Activated CD4-positive, alpha-beta T cell treated with anti-CD3 and anti-CD28 coated beads for 36 hours (primary cell): ENCODE measurements at regions of chr2 and their contacts with region 1.

Region 1: GRCh38 chr2:181058378-181059269 is 78.2 kb downstream of the UBE2E3 start:
- DNase-seq: peak; percentile 50
- ATAC-seq: peak; percentile 69
- H3K4me3 Mint-ChIP-seq: no peak overlapping the region
- H3K27ac Mint-ChIP-seq: no peak overlapping the region
- H3K4me1 Mint-ChIP-seq: peaks cover 6% of the 10 kb centered on the region
- H3K27me3 Mint-ChIP-seq: no peaks in the 10 kb centered on the region

Region 2: DNA sequence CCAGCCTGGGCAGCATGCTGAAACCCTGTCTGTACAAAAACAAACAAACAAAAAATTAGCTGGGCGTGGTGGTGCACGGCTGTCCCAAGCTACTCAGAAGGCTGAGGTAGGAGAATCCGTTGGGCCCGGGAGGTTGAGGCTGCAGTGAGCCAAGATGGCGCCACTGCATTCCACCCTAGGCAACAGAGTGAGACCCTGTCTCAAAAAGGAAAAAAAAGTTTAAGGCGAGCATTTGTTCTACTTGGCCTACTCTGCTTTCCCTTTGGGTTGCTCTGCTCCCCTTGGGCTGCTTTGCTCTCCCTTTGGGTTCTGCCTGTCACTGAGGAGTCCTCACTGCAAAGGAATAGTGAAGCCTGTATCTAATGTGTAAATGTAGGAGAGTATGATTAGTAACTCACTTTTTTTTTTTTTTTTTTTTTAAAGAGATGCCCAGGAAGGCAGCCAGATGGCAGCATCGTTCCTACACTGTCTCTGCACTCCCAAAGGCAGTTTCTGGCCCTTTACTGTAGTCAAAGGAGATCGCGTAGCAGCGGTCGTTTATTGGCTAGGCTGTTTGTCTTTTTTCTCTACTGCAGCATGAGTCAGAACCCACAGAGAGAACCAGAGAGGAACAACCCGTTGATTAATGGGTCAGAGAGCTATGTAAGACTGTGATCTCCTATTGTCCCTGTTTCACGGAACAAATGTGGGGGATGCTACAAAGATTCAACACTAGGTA is 933.2 kb before region 1 on chr2:
- CTCF ChIA-PET with region 1: interaction called, 37 read pairs
- POLR2A ChIA-PET with region 1: no interaction called
- intact Hi-C with region 1: loop called (anchors 1 kb)
- DNase-seq: peak; percentile 60
- ATAC-seq: peak; percentile 88
- H3K4me3 Mint-ChIP-seq: no peak overlapping the region
- H3K27ac Mint-ChIP-seq: no peak overlapping the region
- H3K4me1 Mint-ChIP-seq: peaks cover 1% of the 10 kb centered on the region
- H3K27me3 Mint-ChIP-seq: peaks cover 7% of the 10 kb centered on the region

Region 3: DNA sequence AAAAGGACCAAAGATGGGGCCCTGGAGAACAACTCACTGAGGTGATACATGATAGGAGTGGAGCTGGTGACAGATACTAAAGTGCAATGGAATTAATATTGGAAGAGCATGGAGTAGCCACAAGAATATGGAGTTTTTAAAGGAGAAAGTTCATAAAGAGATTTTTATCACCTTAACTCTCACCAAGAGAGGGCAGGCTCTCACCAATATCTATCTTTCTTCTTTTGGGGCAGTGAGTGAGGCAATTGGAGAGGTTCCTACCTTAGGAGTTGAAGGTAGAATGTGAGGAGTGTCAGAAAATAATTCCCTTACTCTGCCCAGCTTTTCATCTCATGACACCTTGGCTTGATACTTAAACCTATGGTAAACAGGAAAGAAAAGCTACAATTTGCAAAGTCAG is 817.9 kb before region 1 on chr2:
- CTCF ChIA-PET with region 1: no interaction called
- POLR2A ChIA-PET with region 1: no interaction called
- intact Hi-C with region 1: loop called in 1 of 2 experiments (anchors 10 kb)
- DNase-seq: no peak
- ATAC-seq: no peak
- H3K4me3 Mint-ChIP-seq: no peak overlapping the region
- H3K27ac Mint-ChIP-seq: no peak overlapping the region
- H3K4me1 Mint-ChIP-seq: no peaks in the 10 kb centered on the region
- H3K27me3 Mint-ChIP-seq: no peaks in the 10 kb centered on the region

Region 4: DNA sequence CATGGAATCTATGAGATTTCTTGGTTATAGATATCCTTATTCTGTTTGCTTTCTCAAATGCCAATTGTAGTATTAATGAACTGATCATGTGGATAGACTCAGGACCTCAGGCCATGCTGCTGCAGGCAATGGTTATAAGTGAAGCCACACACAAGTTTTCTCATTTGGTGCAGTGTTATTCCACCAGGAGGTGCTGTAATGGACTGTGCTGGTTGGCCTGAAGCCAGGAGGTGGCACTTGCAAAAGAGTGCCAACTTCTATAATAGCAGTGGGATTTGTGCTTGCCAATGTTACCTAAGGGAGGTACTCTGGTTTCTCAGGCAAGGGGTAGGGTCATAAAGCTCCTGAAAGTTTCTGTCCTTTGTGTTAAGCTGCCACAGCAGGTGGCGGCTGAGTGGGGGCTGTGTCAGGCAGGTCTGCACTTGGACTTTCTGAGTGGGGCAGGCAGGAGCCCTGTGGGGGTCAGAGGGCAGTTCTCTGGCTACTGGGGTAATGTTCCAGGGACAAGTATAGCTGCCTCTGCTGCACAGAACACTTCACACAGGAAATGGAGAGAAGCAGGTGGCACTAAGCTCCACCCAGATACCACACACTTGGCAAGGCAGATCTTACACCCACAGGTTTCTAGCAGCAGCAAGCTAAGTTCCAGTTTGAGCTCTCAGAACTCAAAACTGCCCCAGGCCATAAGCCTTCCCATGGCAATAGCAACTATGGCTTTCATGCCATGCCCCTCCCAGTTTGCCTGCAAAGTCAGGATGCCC is 698.9 kb before region 1 on chr2:
- CTCF ChIA-PET with region 1: no interaction called
- POLR2A ChIA-PET with region 1: no interaction called
- intact Hi-C with region 1: loop called in 1 of 2 experiments (anchors 5 kb)
- DNase-seq: peak; percentile 10
- ATAC-seq: peak; percentile 30
- H3K4me3 Mint-ChIP-seq: no peak overlapping the region
- H3K27ac Mint-ChIP-seq: no peak overlapping the region
- H3K4me1 Mint-ChIP-seq: no peaks in the 10 kb centered on the region
- H3K27me3 Mint-ChIP-seq: no peaks in the 10 kb centered on the region

Region 5: GRCh38 chr2:180604077-180604476 is 454.5 kb before region 1 on chr2:
- CTCF ChIA-PET with region 1: no interaction called
- POLR2A ChIA-PET with region 1: no interaction called
- intact Hi-C with region 1: loop called (anchors 2 to 10 kb)
- DNase-seq: peak; percentile 18
- ATAC-seq: peak; percentile 33
- H3K4me3 Mint-ChIP-seq: no peak overlapping the region
- H3K27ac Mint-ChIP-seq: no peak overlapping the region
- H3K4me1 Mint-ChIP-seq: no peaks in the 10 kb centered on the region
- H3K27me3 Mint-ChIP-seq: no peaks in the 10 kb centered on the region

Region 6: GRCh38 chr2:180656455-180656847 is 402.2 kb before region 1 on chr2:
- CTCF ChIA-PET with region 1: no interaction called
- POLR2A ChIA-PET with region 1: no interaction called
- intact Hi-C with region 1: no loop called
- DNase-seq: no peak
- ATAC-seq: peak; percentile 51
- H3K4me3 Mint-ChIP-seq: no peak overlapping the region
- H3K27ac Mint-ChIP-seq: no peak overlapping the region
- H3K4me1 Mint-ChIP-seq: no peaks in the 10 kb centered on the region
- H3K27me3 Mint-ChIP-seq: peaks cover 9% of the 10 kb centered on the region

Region 7: DNA sequence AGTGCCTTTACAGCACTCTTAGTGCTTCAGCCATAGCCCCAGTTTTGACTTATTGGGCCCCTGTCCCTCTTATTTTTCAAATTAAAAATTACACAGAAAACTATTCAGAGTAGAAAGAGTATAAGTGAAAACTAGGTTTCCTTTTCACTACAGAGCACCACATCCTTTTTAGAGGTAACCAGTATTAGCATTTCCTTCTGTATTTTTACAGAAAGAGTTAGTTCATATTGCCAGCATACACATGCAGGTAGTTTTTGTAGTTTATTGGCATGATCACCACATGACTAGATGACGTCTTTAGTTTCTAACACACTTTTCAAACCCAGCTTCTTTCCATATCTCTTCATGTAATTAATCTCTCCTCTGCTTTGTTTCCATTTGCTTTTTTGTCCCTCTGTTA is 11.8 kb before region 1 on chr2:
- CTCF ChIA-PET with region 1: interaction called, 10 read pairs
- POLR2A ChIA-PET with region 1: no interaction called
- intact Hi-C with region 1: no loop called
- DNase-seq: no peak
- ATAC-seq: peak; percentile 51
- H3K4me3 Mint-ChIP-seq: no peak overlapping the region
- H3K27ac Mint-ChIP-seq: no peak overlapping the region
- H3K4me1 Mint-ChIP-seq: peaks cover 5% of the 10 kb centered on the region
- H3K27me3 Mint-ChIP-seq: no peaks in the 10 kb centered on the region